ENCODE measurements at regions of chr1 and their contacts with region 1.

Region 1: DNA sequence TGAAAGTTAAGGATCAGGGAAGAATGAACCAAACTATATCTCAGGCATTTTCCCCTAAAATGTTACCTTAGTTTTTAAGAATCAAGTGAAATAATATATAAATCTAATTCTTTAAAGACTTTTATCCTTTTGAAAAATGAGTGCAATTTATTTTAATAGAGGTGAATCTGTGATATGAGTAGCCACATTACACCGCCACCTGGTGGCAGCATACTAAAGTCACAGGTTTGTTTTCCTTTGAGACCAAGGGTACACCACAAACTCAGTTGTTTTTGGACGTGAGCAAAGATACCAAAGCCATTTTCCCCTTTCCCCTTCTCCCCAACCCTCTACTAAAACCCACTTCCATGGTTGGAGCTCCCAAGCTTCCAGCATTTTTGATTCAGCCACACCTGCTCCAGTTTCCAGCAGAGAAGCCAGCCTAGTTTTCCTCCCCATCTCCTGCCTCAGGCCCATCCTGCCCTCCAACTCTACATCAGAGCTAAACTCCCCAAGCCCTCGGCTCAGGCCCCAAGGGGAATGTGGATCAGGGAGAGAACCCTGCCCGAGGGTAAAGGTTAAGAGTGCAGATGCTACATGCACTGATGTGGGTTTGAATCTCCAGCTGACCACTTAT is 22.9 kb upstream of the LDLRAP1 start:
- DNase-seq: peak; percentile 46 to 52
- ATAC-seq: peak; percentile 62 to 82; a peak in 4 of 6 replicates
- H3K4me3 ChIP-seq: no peak overlapping the region
- H3K27ac ChIP-seq: no peak overlapping the region
- H3K4me1 ChIP-seq: 0 out of 3 replicates have a peak, but pooled peaks cover 7% of the 10 kb centered on the region
- CTCF ChIP-seq: peak; percentile 75
- EP300 ChIP-seq: no peak
- POLR2A ChIP-seq: no peak
- RAD21 ChIP-seq: peak; percentile 52 to 63

Region 2: DNA sequence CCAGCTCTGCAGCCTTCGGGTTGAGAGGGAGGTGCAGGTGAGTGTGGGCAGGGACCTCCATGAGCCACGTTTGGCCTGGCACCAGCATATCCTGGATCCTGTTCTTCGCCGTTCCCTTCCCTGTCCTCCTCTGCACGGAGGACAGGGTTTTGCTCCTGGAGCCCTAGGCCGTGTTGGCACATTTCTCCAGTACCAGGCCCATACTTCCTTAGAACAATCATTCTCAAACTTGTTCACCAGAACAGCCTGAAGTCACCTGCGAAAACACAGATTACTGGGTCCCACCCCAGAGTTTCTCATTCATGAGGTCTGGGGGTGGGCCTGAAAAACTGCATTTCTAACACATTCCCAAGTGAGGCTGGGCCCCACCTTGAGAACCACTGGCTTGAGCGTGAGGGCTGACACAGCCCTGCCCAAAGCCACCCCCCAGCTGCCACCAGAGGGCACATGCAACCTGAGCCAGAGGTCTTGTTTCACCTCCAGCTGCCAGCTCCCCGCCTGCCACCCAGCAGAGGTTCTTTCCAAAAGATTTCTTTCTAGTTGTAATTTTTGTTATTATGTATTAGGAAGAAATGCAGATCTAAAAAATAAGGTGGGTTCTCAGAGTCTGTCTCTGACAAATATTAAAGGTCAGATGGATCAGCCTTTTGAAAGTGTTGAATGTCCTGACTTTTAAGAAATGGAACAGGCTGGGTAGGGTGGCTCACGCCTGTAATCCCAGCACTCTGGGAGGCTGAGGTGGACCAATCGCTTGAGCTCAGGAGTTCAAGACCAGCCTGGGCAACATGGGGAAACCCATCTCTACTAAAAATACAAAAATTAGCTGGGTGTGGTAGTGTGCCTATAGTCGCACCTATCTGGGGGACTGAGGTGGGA is 16.8 kb before region 1 on chr1:
- CTCF ChIA-PET with region 1: interaction called, 35 read pairs
- POLR2A ChIA-PET with region 1: no interaction called
- DNase-seq: peak; percentile 30 to 53
- ATAC-seq: peak; percentile 91 to 95
- H3K4me3 ChIP-seq: no peak overlapping the region
- H3K27ac ChIP-seq: no peak overlapping the region
- H3K4me1 ChIP-seq: peaks cover 25% of the 10 kb centered on the region
- CTCF ChIP-seq: peak; percentile 49; the same call in 2 of the 3 replicates
- EP300 ChIP-seq: no peak
- POLR2A ChIP-seq: no peak
- RAD21 ChIP-seq: peak; percentile 58

Region 3: GRCh38 chr1:25538191-25538761 is 17.7 kb after region 1 on chr1:
- CTCF ChIA-PET with region 1: interaction called, 20 read pairs
- POLR2A ChIA-PET with region 1: no interaction called
- DNase-seq: peak; percentile 32 to 45
- ATAC-seq: peak; percentile 41 to 73; a peak in 3 of 6 replicates
- H3K4me3 ChIP-seq: no peak overlapping the region
- H3K27ac ChIP-seq: peak overlapping the region in 1 of 2 experiments; percentile 64; a peak in 2 of 6 replicates
- H3K4me1 ChIP-seq: peaks cover 10% of the 10 kb centered on the region
- CTCF ChIP-seq: no peak
- EP300 ChIP-seq: no peak
- POLR2A ChIP-seq: no peak
- RAD21 ChIP-seq: no peak

Region 4: DNA sequence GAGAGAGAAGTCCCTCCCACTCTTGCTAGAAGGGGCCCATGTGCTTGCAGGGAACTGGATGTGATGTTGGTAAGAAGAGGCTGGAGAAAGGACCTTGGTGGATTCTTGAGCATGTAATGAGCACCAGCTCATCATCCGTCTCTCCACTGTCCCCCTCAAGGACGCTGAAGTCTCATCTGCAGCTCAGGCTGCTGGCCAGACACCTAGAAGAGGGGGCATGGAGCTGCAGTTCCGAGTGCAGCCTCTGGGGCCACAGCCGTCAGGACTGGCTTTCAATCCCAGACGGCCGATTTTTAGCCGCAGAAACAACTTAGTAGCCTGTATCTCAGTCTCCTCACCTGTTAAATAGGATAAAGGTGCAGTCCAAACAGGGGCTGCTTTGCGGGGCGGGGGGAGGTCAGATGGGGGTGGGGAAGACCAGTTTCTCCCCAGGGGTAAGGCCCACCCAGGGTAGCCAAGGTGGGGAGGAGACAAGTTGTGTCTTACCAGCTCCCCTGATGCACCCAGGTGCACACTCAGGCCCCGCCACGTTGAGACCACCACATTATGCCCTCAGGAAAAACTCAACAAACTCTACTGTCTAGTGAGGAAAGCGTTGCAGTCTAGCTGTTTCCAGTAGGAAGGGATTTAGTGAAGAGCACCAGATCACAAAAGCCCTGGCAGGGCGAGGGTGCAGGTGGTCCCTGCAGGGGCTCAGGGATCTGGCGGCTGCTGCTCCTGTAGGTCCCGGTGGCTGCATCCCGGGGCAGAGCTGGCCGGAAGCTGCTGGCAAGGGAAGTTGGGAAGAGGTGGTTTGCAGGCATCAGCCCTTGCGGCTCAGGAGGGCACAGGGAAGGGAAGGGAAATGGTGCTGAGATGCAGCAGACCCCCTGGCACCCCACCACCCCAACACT is 52.4 kb after region 1 on chr1:
- CTCF ChIA-PET with region 1: interaction called, 10 read pairs
- POLR2A ChIA-PET with region 1: no interaction called
- DNase-seq: peak; percentile 40 to 64
- ATAC-seq: peak; percentile 86 to 92
- H3K4me3 ChIP-seq: no peak overlapping the region
- H3K27ac ChIP-seq: peak overlapping the region; percentile 42 to 52; a peak in 3 of 6 replicates
- H3K4me1 ChIP-seq: peaks cover 27% of the 10 kb centered on the region
- CTCF ChIP-seq: no peak; the same call in 2 of the 3 replicates
- EP300 ChIP-seq: no peak
- POLR2A ChIP-seq: no peak
- RAD21 ChIP-seq: peak in 1 of 2 experiments; percentile 30; a peak in 1 of 5 replicates

Region 5: GRCh38 chr1:25967308-25967707 is 446.8 kb after region 1 on chr1:
- CTCF ChIA-PET with region 1: no interaction called
- POLR2A ChIA-PET with region 1: no interaction called
- DNase-seq: no peak
- ATAC-seq: no peak
- H3K4me3 ChIP-seq: no peak overlapping the region
- H3K27ac ChIP-seq: no peak overlapping the region
- H3K4me1 ChIP-seq: no peaks in the 10 kb centered on the region
- CTCF ChIP-seq: no peak
- EP300 ChIP-seq: no peak
- POLR2A ChIP-seq: no peak
- RAD21 ChIP-seq: no peak

Measured in A549 (cell line).